ENCODE measurements at regions of chr4 and their contacts with region 1.

Region 1: DNA sequence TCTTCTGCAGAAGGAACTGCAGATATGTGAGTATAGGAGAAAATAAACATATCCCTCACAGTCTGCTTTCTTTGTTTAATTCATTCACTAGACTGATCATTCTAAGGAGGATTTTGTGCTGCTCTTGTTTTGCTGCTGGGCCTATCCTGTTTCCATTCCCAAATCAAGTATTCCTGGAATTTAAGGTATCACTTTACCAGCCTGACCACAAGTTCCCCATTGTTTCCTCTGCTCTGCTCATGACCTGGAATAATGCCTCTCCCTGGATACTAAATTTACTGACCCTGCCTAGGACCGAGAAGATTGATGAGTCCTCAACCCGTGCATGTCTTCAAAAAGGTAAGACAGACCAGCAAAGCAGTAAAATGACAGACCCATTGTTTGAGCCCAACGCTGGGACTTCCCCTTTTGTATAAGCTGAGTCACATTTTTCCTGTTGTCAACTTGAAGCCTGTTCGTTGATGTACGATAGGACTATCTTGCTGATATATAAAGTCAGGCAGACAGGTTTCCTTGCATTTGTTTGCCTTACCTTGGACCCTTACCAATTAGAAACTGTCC is 85.5 kb upstream of the TET2 start:
- DNase-seq: peak; percentile 64
- ATAC-seq: peak; percentile 62
- H3K4me3 Mint-ChIP-seq: peak overlapping the region; percentile 48
- H3K27ac Mint-ChIP-seq: peak overlapping the region; percentile 89
- H3K4me1 Mint-ChIP-seq: peaks cover 53% of the 10 kb centered on the region
- H3K27me3 Mint-ChIP-seq: peaks cover 2% of the 10 kb centered on the region

Region 2: GRCh38 chr4:105135785-105136184 is 74.6 kb after region 1 on chr4:
- CTCF ChIA-PET with region 1: interaction called, 4 read pairs
- POLR2A ChIA-PET with region 1: interaction called, 4 read pairs
- intact Hi-C with region 1: loop called (anchors 1 kb)
- DNase-seq: no peak
- ATAC-seq: no peak
- H3K4me3 Mint-ChIP-seq: no peak overlapping the region
- H3K27ac Mint-ChIP-seq: no peak overlapping the region
- H3K4me1 Mint-ChIP-seq: peaks cover 4% of the 10 kb centered on the region
- H3K27me3 Mint-ChIP-seq: no peaks in the 10 kb centered on the region

Region 3: DNA sequence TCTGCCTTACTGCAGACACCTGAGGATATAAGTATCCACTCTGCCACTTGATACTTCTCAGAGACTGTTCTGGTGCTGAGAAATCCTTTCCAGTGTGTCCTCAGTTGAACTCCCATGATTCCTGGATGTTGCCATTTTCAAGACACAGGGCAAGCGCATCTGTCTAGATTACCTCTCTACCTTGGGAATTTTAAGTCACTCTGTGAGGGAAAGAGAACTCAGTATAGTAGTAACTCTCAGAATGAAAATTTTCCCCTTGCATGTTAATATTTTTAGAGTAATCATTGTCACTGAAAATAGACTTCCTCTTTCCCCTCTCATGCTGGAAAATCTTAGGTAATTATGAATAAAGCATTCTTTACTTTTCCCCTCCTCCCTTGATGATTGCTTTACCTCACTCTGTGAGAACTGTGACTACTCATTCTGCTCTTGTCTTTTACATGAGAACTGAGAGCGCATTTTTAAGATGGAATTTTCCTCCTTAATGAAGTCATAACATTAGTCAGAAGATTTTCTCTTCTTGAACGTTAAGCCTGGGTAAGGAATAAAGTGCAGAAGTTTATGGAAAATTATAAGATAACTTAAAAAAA is 130.5 kb after region 1 on chr4:
- CTCF ChIA-PET with region 1: no interaction called
- POLR2A ChIA-PET with region 1: no interaction called
- intact Hi-C with region 1: loop called (anchors 2 kb)
- DNase-seq: peak; percentile 11
- ATAC-seq: peak; percentile 70
- H3K4me3 Mint-ChIP-seq: peak overlapping the region; percentile 12
- H3K27ac Mint-ChIP-seq: peak overlapping the region; percentile 90
- H3K4me1 Mint-ChIP-seq: peaks cover 94% of the 10 kb centered on the region
- H3K27me3 Mint-ChIP-seq: no peaks in the 10 kb centered on the region

Region 4: GRCh38 chr4:105453550-105454205 is 392.5 kb after region 1 on chr4:
- CTCF ChIA-PET with region 1: interaction called, 3 read pairs
- POLR2A ChIA-PET with region 1: no interaction called
- intact Hi-C with region 1: loop called (anchors 5 kb)
- DNase-seq: peak; percentile 60
- ATAC-seq: peak; percentile 99
- H3K4me3 Mint-ChIP-seq: no peak overlapping the region
- H3K27ac Mint-ChIP-seq: peak overlapping the region; percentile 62
- H3K4me1 Mint-ChIP-seq: peaks cover 34% of the 10 kb centered on the region
- H3K27me3 Mint-ChIP-seq: no peaks in the 10 kb centered on the region

Measured in activated CD4-positive, alpha-beta T cell treated with anti-CD3 and anti-CD28 coated beads for 36 hours (primary cell).